Right ventricle myocardium inferior (tissue), 1 donor: ENCODE measurements at regions of chr7 and their contacts with region 1.

Region 1: DNA sequence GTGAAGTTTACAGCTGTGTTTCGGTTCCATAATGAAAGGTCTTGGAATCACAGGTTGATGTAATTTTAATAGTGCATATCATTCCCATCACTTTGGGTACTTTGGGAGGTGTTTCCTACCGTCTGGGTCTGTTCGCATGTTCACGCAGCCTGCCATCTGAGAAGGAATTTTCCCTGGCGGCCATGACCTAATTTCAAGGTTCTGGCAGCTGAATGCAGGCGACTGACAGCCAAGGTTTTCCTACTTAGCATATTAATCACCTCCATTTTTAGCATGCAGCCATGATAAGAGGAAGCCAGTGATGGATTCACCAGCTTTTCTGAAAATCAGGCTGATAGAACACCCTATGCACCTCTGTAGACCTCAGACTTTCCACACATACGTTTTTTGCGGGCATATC is 319.1 kb upstream of the TMEM229A start:
- DNase-seq: peak; percentile 2
- ATAC-seq: peak; percentile 34

Region 2: GRCh38 chr7:123712619-123713018 is 639.3 kb before region 1 on chr7:
- intact Hi-C with region 1: no loop called
- DNase-seq: no peak
- ATAC-seq: no peak

Region 3: GRCh38 chr7:124188576-124188975 is 163.4 kb before region 1 on chr7:
- intact Hi-C with region 1: loop called (anchors 10 kb)
- DNase-seq: no peak
- ATAC-seq: no peak

Region 4: GRCh38 chr7:124322561-124322960 is 29.4 kb before region 1 on chr7:
- intact Hi-C with region 1: no loop called
- DNase-seq: no peak
- ATAC-seq: no peak